ENCODE measurements at regions of chr15 and their contacts with region 1.

Region 1: DNA sequence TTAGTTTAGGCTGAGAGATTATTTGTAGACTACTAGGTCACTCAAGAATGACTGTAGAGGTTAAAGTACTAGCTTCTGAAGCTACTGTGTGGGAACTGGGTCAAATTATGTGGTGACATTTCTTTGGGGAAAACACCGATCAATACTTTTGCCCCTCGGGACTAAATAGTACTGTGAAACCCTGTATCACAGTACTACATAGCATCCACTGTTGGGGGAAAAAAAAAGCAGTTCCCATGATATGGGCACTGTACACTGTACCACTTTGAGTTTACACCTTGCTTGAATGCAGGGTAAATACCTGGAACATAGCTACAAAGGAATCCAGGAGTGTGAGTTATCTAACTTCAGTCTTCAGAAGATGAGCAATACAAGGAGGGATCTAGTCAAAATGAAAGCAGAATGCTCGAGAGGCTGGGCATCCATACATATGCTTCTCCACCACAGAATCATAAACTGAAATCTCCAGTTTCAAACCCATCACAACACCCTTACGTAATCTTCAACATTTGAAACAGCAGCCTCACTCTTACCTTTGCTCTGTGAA is 311.4 kb downstream of the UNC13C start:
- DNase-seq: no peak
- ATAC-seq: no peak
- H3K4me3 ChIP-seq: no peak overlapping the region
- H3K27ac ChIP-seq: no peak overlapping the region
- H3K4me1 ChIP-seq: no peaks in the 10 kb centered on the region
- H3K27me3 ChIP-seq: no peaks in the 10 kb centered on the region
- CTCF ChIP-seq: no peak

Region 2: GRCh38 chr15:54227569-54227968 is 62.1 kb before region 1 on chr15:
- intact Hi-C with region 1: no loop called
- DNase-seq: no peak
- ATAC-seq: no peak
- H3K4me3 ChIP-seq: no peak overlapping the region
- H3K27ac ChIP-seq: no peak overlapping the region
- H3K4me1 ChIP-seq: no peaks in the 10 kb centered on the region
- H3K27me3 ChIP-seq: no peaks in the 10 kb centered on the region
- CTCF ChIP-seq: no peak

Region 3: DNA sequence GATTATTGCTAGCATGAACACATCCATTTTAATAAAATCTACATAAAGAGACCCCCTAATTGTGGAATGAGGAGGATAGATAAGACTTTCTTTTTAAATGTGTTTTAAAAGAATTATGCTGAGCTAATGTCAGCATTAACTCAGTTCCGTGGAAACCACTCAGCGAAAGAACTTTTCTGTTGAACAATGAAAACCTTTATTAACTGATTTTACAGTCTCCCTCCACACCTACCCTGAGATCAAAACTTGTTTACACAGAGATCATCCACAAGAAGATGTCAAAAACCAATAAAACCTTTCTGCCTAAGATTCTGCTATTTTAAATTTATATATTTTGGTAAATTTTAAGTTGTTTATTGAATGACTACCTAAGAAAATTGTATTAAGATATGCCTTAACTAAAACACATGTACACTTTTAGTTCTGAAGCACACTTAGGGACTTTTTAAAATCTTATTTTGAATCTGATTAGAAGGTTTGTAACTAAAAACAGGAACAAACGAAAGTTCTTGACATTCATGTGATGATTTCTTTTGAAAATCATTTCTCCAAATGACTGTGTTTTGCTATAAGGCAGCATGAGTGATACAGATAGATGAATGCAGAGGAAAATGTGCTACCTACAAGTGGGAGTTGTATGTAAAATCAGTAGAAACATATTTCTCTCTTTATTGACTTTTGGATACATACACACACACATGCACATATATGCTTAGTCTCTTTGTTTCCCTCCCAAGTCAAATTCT is 57.6 kb after region 1 on chr15:
- intact Hi-C with region 1: no loop called
- DNase-seq: no peak
- ATAC-seq: no peak
- H3K4me3 ChIP-seq: no peak overlapping the region
- H3K27ac ChIP-seq: no peak overlapping the region
- H3K4me1 ChIP-seq: no peaks in the 10 kb centered on the region
- H3K27me3 ChIP-seq: no peaks in the 10 kb centered on the region
- CTCF ChIP-seq: no peak

Region 4: DNA sequence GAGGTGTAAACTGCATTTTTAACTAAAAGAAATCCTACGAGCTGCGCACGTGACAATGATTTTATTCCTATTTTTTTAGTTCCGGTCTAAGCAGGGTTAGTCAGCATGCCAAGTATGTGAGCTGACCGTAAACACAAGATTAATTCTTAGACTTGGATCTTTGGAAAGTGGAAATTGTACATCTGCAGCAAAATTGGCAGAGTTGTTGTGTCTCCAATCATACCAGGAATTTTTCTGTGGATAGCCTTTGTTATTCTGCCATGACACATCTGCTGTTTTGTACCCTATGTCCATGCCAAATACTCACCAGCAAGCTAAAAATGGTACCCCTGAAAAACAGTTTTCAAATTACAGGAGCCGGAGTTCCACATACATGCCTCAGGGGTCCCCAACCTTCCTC is 251.1 kb after region 1 on chr15:
- intact Hi-C with region 1: no loop called
- DNase-seq: no peak
- ATAC-seq: no peak
- H3K4me3 ChIP-seq: no peak overlapping the region
- H3K27ac ChIP-seq: no peak overlapping the region
- H3K4me1 ChIP-seq: no peaks in the 10 kb centered on the region
- H3K27me3 ChIP-seq: no peaks in the 10 kb centered on the region
- CTCF ChIP-seq: no peak

Region 5: DNA sequence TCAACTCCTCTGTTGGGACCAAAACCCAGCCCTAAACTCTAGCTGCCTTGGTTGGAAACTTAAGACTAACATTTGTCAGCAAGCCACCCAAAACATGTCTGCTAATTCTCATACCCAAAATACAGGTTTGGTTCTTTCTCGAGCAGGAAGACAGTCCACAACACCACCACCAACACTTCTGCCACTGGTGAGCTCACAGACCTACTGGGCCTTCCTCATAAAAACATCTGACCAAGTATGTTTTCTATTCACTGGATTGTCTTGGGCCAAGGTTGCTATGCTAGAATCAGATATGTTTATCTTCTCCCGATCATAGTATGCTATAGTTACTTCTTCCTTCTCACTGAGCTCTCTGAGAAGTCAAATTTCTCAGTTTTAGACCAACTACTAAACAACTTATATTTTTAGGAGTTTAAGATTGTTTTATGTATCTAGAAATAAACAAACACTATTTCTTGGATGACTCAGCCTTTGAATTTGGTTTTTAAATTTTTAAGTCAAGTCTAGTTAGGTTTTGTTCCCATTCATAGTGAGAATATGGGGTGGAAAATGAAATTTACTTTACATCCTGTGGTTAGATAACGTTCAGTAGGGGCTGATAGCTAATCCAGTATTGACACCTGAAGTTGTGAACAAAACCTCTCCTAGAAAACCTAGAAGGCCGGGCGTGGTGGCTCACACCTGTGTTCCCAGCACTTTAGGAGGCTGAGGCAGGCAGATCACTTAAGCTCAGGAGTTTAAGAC is 546.6 kb after region 1 on chr15:
- intact Hi-C with region 1: loop called in 1 of 10 experiments (anchors 10 kb)
- DNase-seq: no peak
- ATAC-seq: no peak
- H3K4me3 ChIP-seq: no peak overlapping the region
- H3K27ac ChIP-seq: no peak overlapping the region
- H3K4me1 ChIP-seq: no peaks in the 10 kb centered on the region
- H3K27me3 ChIP-seq: peaks cover 0 to 6% (median 0%) of the 10 kb centered on the region in 7 donors
- CTCF ChIP-seq: no peak

Measured in heart right ventricle (tissue), 16 donors.